ENCODE measurements at regions of chr20 and their contacts with region 1.

Region 1: DNA sequence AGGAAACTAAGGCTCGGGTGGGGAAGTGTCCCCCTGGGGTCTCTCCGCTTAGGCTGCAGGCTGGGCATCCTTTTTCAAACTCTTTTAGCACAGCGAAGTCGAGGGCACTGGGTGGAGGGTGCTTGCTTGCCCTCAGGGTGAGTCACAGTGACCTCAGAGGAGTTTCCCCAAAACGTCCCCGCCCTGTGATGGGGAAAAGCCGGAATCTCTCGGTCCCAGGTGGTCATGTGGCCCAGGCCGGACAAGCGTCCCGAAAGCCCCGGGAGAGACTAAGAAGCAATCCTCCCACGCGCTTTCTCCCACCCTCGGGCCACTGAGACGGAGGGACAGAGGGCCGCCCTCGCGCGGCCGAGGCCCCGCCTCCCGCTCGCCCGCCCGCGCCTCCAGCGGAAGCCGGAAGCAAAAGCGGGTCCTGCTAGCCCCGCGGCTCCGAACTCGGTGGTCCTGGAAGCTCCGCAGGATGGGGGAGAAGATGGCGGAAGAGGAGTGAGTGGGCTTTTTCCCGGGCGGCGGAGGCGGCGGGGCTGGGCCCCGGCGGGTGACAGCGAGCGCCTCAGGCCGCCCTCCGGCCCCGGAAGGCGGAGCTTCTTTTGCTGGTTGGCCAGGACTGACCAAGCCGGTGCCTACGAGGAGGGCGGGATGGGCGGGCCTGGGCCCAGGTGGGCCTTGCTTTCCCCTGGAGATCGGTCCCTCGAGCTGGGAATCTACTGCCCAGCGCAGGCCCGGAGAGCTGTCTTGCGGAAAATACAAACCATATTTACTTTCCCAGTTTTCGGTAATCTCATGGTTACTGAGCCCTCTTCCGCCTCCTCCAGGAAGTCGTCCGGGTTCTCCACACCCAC is at the start of gene SLC9A8:
- DNase-seq: peak; percentile 70 to 84
- ATAC-seq: peak; percentile 81 to 84
- H3K4me3 ChIP-seq: peak within 1 kb of the TSS; percentile 65 to 100 (median 80)
- H3K27ac ChIP-seq: peak within 1 kb of the TSS; percentile 91 to 100 (median 96)
- H3K4me1 ChIP-seq: peaks cover 22 to 24% of the 10 kb centered on the region in 2 donors
- H3K27me3 ChIP-seq: no peaks in the 10 kb centered on the region
- CTCF ChIP-seq: peak; percentile 19 to 70 (median 32)
- POLR2A ChIP-seq: peak; percentile 79 to 90
- total RNA-seq, gene SLC9A8: 12.4 to 20.4 (median 15.1) TPM

Region 2: GRCh38 chr20:49713753-49714712 is 98.7 kb before region 1 on chr20 and contains the start of gene B4GALT5:
- in situ Hi-C with region 1: no loop called
- intact Hi-C with region 1: loop called (anchors 2 kb)
- DNase-seq: peak; percentile 27 to 56
- ATAC-seq: peak; percentile 67 to 72
- H3K4me3 ChIP-seq: peak within 1 kb of the TSS; percentile 89 to 98 (median 92)
- H3K27ac ChIP-seq: peak within 1 kb of the TSS; percentile 95 to 99 (median 98)
- H3K4me1 ChIP-seq: peaks cover 44 to 59% of the 10 kb centered on the region in 2 donors
- H3K27me3 ChIP-seq: no peaks in the 10 kb centered on the region
- CTCF ChIP-seq: no peak
- POLR2A ChIP-seq: peak; percentile 69 to 78
- total RNA-seq, gene B4GALT5: 27.6 to 75.2 (median 56.4) TPM

Region 3: DNA sequence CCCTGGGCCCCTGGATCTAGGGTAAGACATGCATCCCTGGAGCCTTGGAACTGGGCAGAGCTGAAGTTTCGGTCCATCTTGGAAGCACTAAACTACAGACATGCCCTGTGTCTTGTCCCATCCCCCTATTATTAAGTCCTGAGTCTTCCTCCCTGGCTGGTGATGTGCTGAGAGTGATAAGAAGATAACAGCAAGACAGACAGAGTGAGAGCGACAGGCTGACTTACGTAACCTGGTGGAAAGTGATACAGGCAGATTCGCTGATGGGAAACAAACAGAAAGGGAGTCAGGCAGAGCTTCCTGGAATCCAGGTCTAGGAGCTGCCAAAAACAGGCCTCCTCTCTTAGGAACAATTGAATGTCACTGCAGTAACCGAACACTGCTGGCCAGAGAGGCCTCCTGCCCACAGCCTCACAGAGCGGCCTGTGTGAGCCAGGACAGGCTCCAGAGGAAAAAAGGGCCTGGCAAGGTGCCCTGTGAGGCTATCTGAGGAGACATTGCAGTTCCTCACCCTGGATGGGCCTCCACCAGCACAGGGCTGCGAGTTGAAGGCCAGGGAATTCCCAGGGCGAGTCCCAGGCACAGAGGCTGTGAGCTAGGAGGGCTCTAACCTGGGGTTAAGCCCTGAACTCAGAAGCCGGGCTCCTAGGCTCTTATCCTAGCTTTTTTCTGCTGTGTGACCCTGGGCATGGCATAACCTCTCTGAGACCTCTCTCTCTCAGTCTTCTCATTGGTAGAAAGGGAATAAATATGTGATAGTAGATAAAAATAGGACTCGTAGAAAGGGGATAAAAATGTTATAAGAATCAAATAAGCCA is 64.8 kb before region 1 on chr20:
- in situ Hi-C with region 1: no loop called
- intact Hi-C with region 1: loop called (anchors 2 kb)
- DNase-seq: peak; percentile 92 to 98
- ATAC-seq: peak; percentile 94 to 98
- H3K4me3 ChIP-seq: no peak overlapping the region
- H3K27ac ChIP-seq: peak overlapping the region; percentile 78 to 90 (median 87)
- H3K4me1 ChIP-seq: peaks cover 32 to 40% of the 10 kb centered on the region in 2 donors
- H3K27me3 ChIP-seq: no peaks in the 10 kb centered on the region
- CTCF ChIP-seq: no peak
- POLR2A ChIP-seq: no peak

Region 4: GRCh38 chr20:49768204-49769047 is 44.3 kb before region 1 on chr20:
- in situ Hi-C with region 1: no loop called
- intact Hi-C with region 1: loop called (anchors 1 kb)
- DNase-seq: peak; percentile 70 to 87
- ATAC-seq: peak; percentile 70 to 77
- H3K4me3 ChIP-seq: no peak overlapping the region
- H3K27ac ChIP-seq: peak overlapping the region; percentile 82 to 90 (median 86)
- H3K4me1 ChIP-seq: peaks cover 34 to 61% of the 10 kb centered on the region in 2 donors
- H3K27me3 ChIP-seq: no peaks in the 10 kb centered on the region
- CTCF ChIP-seq: no peak
- POLR2A ChIP-seq: no peak

Region 5: DNA sequence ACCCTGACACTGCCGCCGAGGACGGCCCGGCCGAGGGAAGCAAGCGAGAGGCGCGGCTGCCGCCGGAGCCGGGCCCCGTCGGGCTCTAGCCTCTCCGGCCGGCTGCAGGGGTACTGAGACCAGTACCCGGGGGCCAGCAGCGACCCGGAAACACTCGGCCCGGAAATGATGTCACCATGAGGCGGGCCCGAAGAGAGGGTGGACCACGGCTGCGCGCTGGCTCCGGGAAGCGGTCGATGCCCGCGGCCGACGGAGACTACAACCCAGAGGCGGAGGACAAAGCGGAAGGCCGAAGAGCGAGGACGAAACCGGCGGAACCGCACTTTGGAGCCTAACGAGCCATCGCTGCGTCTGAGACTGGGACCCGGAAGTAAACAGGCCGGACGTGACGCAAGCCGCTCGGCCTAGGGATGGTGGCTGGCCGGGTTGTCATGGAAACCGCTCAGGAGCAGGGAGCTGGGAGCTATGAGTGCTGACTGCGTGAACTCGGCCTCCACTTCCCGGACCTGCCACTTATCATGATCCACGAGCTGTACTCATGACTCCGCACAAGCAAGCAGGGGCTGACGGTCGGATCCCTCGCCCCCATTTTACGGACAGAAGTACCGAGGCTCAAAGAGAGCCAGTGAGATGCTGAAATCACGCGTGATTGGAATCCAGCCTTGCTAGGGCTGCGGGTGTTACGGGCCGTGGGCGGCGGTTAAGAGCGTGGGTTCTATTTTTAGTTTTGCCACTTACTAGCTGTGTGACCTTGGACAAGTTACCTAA is 102.9 kb after region 1 on chr20 and contains the start of gene SPATA2:
- in situ Hi-C with region 1: no loop called
- intact Hi-C with region 1: loop called (anchors 5 kb)
- DNase-seq: peak; percentile 91 to 92
- ATAC-seq: peak; percentile 89 to 92
- H3K4me3 ChIP-seq: peak within 1 kb of the TSS; percentile 84 to 99 (median 92)
- H3K27ac ChIP-seq: peak within 1 kb of the TSS; percentile 94 to 100 (median 96)
- H3K4me1 ChIP-seq: peaks cover 34 to 45% of the 10 kb centered on the region in 2 donors
- H3K27me3 ChIP-seq: no peaks in the 10 kb centered on the region
- CTCF ChIP-seq: no peak
- POLR2A ChIP-seq: peak; percentile 88 to 89
- total RNA-seq, gene SPATA2: 7.7 to 10.7 (median 9.7) TPM

Region 6: DNA sequence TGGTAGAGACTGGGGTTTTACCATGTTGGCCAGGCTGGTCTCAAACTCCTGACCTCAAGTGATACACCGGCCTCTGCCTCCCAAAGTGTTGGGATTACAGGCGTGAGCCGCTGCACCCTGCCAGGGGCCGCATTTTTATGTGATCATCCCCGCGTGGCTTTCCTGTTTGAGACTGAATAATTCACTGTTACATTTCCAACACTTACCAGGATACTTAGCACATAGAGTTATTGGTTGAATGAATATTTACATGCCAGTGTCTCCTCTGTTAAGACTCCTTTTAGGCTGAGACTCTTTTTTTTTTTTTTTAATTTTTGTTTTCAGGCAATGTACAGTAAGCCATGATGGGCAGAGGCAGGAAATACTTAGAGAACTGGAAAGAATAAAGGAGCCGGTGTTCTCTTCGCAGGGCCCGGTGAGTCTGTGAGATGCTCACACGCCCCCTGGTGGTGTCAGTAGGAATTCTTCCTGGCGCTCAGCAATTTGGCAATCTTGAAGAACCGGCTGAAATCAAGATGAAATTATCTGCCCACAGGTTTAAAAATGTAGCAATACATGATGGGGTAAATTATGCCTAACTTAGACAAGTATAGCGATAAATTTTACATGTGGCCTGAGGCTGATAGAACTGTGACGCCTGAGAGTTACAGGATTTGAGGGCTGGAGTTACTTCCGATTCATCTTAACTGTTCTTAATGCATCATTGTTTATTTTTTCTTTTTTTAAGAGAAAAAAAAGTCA is 115.9 kb after region 1 on chr20:
- in situ Hi-C with region 1: no loop called
- intact Hi-C with region 1: no loop called
- DNase-seq: peak; percentile 62 to 72
- ATAC-seq: peak; percentile 80
- H3K4me3 ChIP-seq: no peak overlapping the region
- H3K27ac ChIP-seq: no peak overlapping the region
- H3K4me1 ChIP-seq: no peaks in the 10 kb centered on the region
- H3K27me3 ChIP-seq: no peaks in the 10 kb centered on the region
- CTCF ChIP-seq: peak; percentile 87 to 95 (median 88)
- POLR2A ChIP-seq: no peak

Measured in gastrocnemius medialis (tissue), 4 donors.